Panc1 (cell line): ENCODE measurements at regions of chr19 and their contacts with region 1.

Region 1: GRCh38 chr19:1672038-1672768 is 19.8 kb upstream of the TCF3 start:
- DNase-seq: no peak
- ATAC-seq: peak; percentile 73
- H3K4me3 ChIP-seq: peak overlapping the region; percentile 39 to 61
- H3K27ac ChIP-seq: peak overlapping the region; percentile 54
- H3K4me1 ChIP-seq: peaks cover 22% of the 10 kb centered on the region
- H3K27me3 ChIP-seq: no peaks in the 10 kb centered on the region
- CTCF ChIP-seq: peak; percentile 95

Region 2: DNA sequence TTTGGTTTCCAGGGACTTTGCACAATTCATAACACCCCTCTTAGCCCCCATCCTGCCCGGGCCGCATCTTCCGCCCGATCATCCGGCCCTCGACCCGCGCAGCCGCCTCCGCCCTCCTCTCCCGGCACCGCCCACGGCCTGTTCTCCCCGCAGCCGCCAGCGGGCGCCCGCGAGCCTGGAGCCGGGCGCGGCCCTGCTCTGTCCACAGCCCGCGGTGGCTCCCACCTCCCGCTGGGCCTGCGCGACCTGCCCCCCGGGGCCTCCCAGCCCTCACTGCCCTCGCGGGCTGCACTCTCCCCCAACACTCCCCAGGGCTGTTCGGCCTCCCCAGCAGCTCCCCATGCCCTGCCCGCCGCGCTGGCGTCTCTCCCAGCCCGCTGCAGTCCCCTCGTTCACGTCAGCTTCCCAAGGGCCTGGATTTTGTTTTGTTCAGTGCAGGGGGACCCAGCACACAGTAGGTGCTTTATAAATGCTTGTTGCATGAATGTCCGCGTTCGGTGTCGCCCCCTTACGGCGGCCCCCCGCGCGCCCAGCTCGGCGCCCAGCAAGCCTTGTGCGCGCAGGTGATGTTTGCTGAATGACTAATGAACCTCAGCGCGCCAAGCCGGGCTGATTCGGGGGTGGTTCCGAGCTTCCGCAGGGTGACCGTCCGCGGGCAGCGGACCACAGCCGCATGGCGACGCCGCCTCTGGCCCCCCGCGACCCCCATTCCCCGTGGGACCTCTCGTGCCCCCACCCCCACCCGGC is 226.8 kb before region 1 on chr19:
- CTCF ChIA-PET with region 1: no interaction called
- POLR2A ChIA-PET with region 1: interaction called, 12 read pairs
- in situ Hi-C with region 1: no loop called
- intact Hi-C with region 1: no loop called
- DNase-seq: no peak
- ATAC-seq: peak; percentile 81
- H3K4me3 ChIP-seq: peak overlapping the region; percentile 47 to 52
- H3K27ac ChIP-seq: peak overlapping the region; percentile 89
- H3K4me1 ChIP-seq: peaks cover 41% of the 10 kb centered on the region
- H3K27me3 ChIP-seq: no peaks in the 10 kb centered on the region
- CTCF ChIP-seq: peak; percentile 98

Region 3: DNA sequence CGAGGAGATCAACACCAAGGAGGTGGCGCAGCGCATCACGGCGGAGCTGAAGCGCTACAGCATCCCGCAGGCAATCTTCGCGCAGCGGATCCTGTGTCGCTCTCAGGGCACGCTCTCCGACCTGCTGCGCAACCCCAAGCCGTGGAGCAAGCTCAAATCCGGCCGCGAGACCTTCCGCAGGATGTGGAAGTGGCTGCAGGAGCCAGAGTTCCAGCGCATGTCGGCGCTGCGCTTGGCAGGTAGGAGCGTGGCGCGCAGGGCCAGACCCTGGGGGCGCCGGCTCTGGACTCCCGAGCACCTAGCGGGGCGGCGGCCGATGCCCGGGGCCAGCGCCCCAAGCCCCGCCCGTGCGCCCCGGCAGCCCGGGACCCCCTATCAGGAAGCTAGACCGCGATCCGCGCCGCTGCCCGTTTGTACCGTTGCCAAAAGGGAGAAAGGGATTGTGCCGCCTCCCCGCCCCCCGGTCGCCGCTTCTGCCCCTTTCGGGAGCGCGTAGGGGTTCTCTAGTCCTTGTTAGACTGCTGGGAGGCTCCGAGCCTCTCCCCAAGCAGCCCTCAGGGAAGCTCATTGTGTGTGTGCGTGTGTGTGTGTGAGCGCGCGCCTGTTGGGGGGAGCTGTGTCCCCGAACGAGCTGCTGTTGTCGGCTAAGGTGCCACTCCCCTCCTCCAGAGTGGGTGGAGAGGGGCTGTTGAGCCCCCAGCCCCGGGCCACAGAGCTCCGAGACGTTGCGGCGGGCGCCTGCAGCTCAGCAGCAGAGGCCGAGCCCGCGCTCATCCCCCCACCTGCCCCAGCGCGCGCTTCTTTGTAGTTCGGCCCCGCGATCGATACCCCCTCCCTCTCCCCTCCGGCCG is 82.6 kb after region 1 on chr19:
- CTCF ChIA-PET with region 1: no interaction called
- POLR2A ChIA-PET with region 1: no interaction called
- in situ Hi-C with region 1: no loop called
- intact Hi-C with region 1: loop called (anchors 10 kb)
- DNase-seq: no peak
- ATAC-seq: peak; percentile 18
- H3K4me3 ChIP-seq: peak overlapping the region; percentile 64 to 75
- H3K27ac ChIP-seq: peak overlapping the region; percentile 88
- H3K4me1 ChIP-seq: peaks cover 41% of the 10 kb centered on the region
- H3K27me3 ChIP-seq: no peaks in the 10 kb centered on the region
- CTCF ChIP-seq: no peak

Region 4: DNA sequence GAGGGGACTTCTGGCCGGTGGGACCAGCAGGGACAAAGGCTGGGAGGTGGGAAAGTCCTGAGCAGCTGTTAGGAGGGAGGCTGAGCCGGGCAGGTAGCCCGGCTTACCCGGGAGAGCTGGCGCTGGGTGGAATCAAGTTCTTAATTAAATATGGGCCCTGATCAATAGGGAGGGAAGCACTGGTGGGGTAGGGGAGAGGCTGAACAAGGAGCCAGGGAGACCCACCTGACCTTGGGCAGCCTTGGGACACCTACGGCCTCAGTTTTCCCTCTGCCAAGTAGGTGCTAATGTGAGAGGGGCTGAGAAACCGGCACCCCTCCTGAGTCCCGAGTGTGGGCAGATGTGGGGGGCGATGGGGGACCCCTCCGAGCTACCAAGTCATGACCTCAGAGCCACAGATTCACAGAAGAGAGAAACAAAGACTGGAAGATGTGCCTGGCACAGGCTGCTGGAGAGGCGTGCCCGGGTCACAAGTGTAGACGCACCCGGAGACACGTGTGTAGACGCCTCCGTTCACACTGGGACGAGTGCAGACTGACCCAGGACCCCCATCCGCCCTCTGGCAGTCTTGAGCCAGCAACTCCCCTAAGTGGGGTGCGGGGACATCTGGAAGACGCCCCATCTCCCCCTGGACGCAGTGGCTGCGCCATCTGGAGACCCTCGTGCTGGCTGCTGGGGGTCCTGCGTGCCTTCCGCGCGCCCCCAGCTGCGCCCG is 89.5 kb after region 1 on chr19:
- CTCF ChIA-PET with region 1: no interaction called
- POLR2A ChIA-PET with region 1: interaction called, 14 read pairs
- in situ Hi-C with region 1: no loop called
- intact Hi-C with region 1: loop called (anchors 10 kb)
- DNase-seq: no peak
- ATAC-seq: no peak
- H3K4me3 ChIP-seq: no peak overlapping the region
- H3K27ac ChIP-seq: no peak overlapping the region
- H3K4me1 ChIP-seq: peaks cover 25% of the 10 kb centered on the region
- H3K27me3 ChIP-seq: no peaks in the 10 kb centered on the region
- CTCF ChIP-seq: no peak